ENCODE measurements at regions of chr15 and their contacts with region 1.

Region 1: GRCh38 chr15:60299452-60300047 is 98.2 kb downstream of the ANXA2 start:
- DNase-seq: no peak
- ATAC-seq: no peak
- H3K4me3 ChIP-seq: no peak overlapping the region
- H3K27ac ChIP-seq: no peak overlapping the region
- H3K4me1 ChIP-seq: no peaks in the 10 kb centered on the region
- H3K27me3 ChIP-seq: no peaks in the 10 kb centered on the region
- CTCF ChIP-seq: no peak
- POLR2A ChIP-seq: no peak

Region 2: DNA sequence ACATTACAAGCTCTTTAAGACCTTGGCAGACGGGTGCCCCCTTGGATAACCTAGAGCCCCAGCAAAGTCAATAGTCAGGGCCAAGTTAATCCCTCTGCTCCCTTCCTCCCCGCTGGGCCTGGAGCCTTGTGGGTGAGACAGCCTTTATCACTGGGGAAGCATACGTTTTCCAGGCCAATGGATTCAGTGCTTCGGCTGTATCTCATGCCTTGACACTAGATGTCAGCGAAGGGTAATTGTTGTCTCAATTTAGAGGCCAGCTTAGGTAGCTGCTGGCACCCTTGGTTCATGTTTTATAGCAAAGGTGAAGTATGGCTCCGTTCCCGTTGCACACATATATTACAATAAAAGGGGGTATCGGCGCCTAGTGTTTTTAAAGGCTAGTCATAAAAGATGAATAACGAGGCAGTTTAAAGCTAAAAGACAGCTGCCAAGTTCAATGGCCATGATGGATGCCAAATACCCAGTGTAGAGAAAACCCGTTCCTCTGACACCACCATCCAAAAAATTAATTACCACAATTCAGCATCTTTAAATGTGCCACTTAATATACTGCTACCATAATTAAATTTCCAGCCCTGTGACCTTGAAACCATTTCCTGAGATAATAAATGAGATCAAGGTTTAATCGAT is 558.2 kb before region 1 on chr15:
- in situ Hi-C with region 1: loop called in 2 of 4 experiments (anchors 25 kb)
- intact Hi-C with region 1: no loop called
- DNase-seq: no peak
- ATAC-seq: no peak
- H3K4me3 ChIP-seq: no peak overlapping the region
- H3K27ac ChIP-seq: no peak overlapping the region
- H3K4me1 ChIP-seq: no peaks in the 10 kb centered on the region
- H3K27me3 ChIP-seq: peaks cover 0 to 2% (median 0%) of the 10 kb centered on the region in 3 donors
- CTCF ChIP-seq: no peak
- POLR2A ChIP-seq: no peak

Region 3: DNA sequence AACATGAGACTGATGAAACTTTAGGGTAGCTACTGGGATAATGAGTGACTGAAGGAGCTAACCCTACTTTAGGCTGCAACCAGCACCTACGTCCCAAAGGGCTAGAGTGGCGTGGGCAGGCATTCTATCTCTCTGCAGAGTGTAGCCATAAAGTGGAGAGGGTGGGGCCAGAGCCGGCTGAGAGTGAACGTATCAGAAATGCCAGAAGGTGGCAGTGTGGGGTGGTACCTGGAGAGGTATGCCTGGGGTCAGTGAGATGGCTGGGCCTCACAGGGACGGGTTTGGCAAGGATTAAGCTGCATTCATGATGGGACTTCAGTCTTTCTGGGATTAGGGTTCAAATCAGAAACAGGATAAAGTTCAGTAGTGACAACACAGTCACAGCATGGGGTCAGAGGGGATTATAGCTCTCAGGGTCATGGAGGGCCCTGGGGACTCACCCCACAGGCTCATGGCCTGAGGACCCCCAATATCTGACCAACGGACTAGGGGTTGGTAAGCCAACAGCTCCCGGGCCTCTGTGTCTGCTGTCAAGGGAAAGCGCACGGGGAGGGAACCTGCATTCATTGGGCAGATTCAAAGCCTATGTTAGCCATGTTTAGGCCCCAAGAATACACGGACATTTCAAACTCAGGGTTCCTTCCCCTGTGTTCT is 381.9 kb before region 1 on chr15:
- in situ Hi-C with region 1: loop called in 1 of 4 experiments (anchors 25 kb)
- intact Hi-C with region 1: no loop called
- DNase-seq: peak in 1 of 2 donors; percentile 15
- ATAC-seq: no peak
- H3K4me3 ChIP-seq: no peak overlapping the region
- H3K27ac ChIP-seq: no peak overlapping the region
- H3K4me1 ChIP-seq: no peaks in the 10 kb centered on the region
- H3K27me3 ChIP-seq: peaks cover 0 to 9% (median 8%) of the 10 kb centered on the region in 3 donors
- CTCF ChIP-seq: no peak
- POLR2A ChIP-seq: no peak

Region 4: DNA sequence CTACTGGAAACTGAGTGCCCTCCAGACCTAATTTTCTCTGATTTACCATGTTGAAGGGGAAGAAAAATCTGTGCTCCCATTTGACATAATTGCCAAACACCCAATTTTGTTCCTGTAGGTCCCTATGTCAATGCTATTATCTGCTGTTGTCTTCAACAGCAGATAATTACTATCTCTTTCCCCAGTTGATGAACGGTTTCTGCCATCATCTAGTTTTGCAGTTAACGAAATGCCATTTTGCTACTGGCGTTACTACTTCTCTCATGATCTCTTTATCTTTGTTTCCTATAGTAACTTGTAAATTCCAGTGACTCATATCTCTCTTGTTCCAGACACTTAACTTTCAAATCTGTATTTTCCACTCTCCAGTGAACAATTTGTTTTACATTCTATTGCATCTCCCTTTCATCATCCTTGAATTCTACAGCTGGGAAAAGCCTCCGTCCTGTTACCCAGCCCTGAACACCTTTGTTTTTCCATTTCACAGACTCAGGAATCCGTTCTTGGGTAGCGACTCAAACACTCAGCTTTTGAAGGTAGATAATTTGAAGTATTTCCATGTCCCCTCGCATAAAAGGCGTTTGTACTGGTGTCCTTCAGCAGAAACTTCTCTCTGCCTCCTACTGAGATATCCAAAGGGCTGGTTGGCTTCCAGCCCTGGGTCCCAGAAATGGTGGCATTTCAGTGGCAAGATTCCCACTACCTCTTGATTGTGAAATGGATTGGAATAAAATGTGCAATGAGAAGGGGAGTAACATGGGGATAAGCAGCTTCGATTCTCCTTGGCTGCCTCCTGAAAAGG is 183.8 kb before region 1 on chr15:
- in situ Hi-C with region 1: no loop called
- intact Hi-C with region 1: no loop called
- DNase-seq: no peak
- ATAC-seq: no peak
- H3K4me3 ChIP-seq: no peak overlapping the region
- H3K27ac ChIP-seq: no peak overlapping the region
- H3K4me1 ChIP-seq: no peaks in the 10 kb centered on the region
- H3K27me3 ChIP-seq: peaks cover 0 to 5% (median 4%) of the 10 kb centered on the region in 3 donors
- CTCF ChIP-seq: no peak
- POLR2A ChIP-seq: no peak

Region 5: DNA sequence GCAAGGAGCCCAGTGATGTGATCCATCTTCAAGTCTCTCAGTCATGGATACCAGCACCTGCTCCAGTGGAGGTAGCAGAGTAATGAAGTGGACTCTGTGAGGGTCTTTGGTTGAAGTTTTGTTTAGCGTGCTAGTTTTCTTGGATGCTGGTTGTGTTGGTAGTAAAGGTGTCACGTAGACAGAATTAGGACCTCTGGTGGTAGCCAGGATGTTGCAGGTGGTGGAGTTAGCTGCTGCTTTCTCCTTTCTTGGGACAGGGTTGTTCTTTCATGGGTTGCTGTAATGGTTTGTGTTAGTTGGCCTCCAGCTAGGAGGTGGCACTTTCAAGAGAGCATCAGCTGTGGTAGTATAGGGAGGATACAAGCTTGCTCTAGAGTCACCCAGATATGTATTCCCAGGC is 26.9 kb before region 1 on chr15:
- in situ Hi-C with region 1: no loop called
- intact Hi-C with region 1: no loop called
- DNase-seq: no peak
- ATAC-seq: no peak
- H3K4me3 ChIP-seq: no peak overlapping the region
- H3K27ac ChIP-seq: no peak overlapping the region
- H3K4me1 ChIP-seq: no peaks in the 10 kb centered on the region
- H3K27me3 ChIP-seq: peaks cover 0 to 6% (median 0%) of the 10 kb centered on the region in 3 donors
- CTCF ChIP-seq: no peak
- POLR2A ChIP-seq: no peak

Region 6: DNA sequence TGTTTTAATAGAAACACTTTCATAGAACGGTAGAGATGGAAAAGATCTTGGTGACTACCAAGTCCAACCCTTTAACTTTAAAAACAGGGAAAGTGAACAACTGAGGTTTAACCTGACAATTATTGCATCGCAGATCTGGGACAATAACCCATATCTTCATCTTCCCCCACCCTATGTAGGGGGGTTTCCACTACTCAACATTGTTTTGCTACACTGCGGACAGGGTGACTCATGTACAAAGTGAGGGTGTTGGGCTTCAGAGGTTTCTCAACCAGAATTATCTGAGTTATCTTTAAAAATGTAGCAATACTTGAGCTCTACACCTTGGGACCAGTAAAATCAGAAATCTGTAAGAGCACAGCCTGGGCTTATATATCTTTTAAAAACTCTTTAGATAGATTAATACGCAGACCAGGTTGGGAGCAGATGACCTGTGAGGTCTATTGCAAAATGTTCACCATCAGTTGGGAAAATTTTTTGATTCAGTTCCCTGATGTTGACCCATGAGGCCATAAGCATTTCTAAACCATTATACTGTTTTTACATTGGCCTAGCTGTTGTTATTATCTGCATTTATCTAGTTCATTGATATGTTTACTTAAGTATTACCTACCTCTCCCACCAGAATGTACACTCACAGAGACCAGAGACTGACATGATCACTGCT is 283.0 kb after region 1 on chr15:
- in situ Hi-C with region 1: no loop called
- intact Hi-C with region 1: no loop called
- DNase-seq: no peak
- ATAC-seq: peak; percentile 18 to 51
- H3K4me3 ChIP-seq: no peak overlapping the region
- H3K27ac ChIP-seq: peak overlapping the region in 3 of 4 donors; percentile 12 to 26 (median 13)
- H3K4me1 ChIP-seq: peaks cover 71 to 81% of the 10 kb centered on the region in 2 donors
- H3K27me3 ChIP-seq: no peaks in the 10 kb centered on the region
- CTCF ChIP-seq: no peak
- POLR2A ChIP-seq: no peak